ENCODE measurements at regions of chr1 and their contacts with region 1.

Region 1: DNA sequence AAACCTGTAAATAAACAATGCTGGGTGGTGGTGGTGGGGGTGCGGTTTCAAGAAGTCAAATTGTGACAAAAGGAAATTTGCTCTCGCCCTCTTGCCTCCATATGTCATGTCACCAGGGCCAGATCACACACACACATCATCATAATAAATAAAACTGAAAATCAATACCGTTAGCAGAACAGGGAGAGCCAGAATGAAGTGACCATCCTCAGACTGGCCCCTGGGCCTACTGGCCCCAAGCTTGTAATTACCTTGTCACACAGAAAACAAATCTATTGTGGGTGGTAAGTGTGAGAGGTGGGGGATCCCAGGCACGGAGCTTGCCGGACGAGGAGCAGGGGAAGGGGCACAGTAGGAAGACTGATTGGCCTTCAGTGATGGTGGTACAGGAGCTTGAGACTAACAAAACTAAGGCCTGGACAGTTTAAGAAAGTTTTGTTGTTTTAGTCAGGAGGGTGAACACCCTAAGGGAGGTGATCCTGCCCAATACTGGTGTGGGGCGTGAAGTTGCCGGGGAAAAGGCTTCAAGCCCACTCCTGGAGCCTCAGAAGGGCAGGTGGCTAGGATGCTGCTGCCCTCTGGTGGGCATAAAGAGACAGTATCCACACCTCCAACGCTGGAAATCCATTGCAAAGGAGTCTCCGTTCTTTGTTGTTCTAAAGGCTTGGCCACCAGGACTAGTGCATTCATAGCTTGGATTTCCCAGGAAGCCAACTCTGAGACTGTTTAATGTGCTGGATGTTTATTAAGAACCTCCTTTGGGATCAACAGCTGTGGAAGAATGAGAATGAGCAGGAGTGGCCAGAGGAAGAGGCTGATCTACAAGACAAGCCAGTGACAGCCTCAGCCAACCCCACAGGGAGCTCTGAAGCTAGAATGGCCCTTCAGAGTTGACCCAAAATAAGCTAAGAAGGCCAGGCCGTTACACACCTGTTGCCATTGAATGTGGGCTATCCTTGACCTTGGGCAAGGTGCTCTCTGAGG is 8.1 kb upstream of the C1orf216 start:
- DNase-seq: peak; percentile 61
- ATAC-seq: peak; percentile 94
- H3K4me3 Mint-ChIP-seq: no peak overlapping the region
- H3K27ac Mint-ChIP-seq: peak overlapping the region; percentile 56; the same call in 1 of the 2 replicates
- H3K4me1 Mint-ChIP-seq: peaks cover 11% of the 10 kb centered on the region
- H3K27me3 Mint-ChIP-seq: no peaks in the 10 kb centered on the region
- CTCF ChIP-seq: peak; percentile 76

Region 2: GRCh38 chr1:35243691-35244090 is 483.1 kb before region 1 on chr1:
- CTCF ChIA-PET with region 1: no interaction called
- POLR2A ChIA-PET with region 1: no interaction called
- DNase-seq: no peak
- ATAC-seq: no peak
- H3K4me3 Mint-ChIP-seq: no peak overlapping the region
- H3K27ac Mint-ChIP-seq: no peak overlapping the region
- H3K4me1 Mint-ChIP-seq: no peaks in the 10 kb centered on the region
- H3K27me3 Mint-ChIP-seq: no peaks in the 10 kb centered on the region
- CTCF ChIP-seq: no peak

Region 3: GRCh38 chr1:35569936-35570335 is 156.8 kb before region 1 on chr1:
- CTCF ChIA-PET with region 1: interaction called, 80 read pairs
- POLR2A ChIA-PET with region 1: no interaction called
- DNase-seq: no peak
- ATAC-seq: no peak
- H3K4me3 Mint-ChIP-seq: no peak overlapping the region
- H3K27ac Mint-ChIP-seq: no peak overlapping the region
- H3K4me1 Mint-ChIP-seq: peaks cover 15% of the 10 kb centered on the region
- H3K27me3 Mint-ChIP-seq: peaks cover 60% of the 10 kb centered on the region
- CTCF ChIP-seq: no peak

Region 4: DNA sequence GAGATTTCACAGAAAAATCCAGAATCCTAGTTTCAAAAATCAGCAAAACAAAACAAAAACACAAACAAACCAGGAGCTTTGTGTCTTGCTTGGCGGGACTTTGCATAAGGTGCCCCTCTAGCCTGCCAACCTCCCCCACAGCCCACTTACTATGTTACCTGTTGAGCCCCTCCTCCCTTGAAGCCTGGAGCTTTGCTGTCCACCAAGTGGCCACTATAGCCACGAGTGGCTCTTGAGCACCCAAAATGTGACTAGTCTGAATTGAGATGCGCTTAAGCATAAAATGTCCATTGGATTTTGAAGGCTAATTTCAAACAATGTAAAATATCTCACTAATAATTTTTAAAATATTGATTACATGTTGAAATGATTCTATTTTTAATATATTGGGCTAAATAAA is 141.5 kb before region 1 on chr1:
- CTCF ChIA-PET with region 1: interaction called, 19 read pairs
- POLR2A ChIA-PET with region 1: no interaction called
- DNase-seq: no peak
- ATAC-seq: no peak
- H3K4me3 Mint-ChIP-seq: no peak overlapping the region
- H3K27ac Mint-ChIP-seq: no peak overlapping the region
- H3K4me1 Mint-ChIP-seq: peaks cover 10% of the 10 kb centered on the region; the same call in 1 of the 2 replicates
- H3K27me3 Mint-ChIP-seq: peaks cover 3% of the 10 kb centered on the region
- CTCF ChIP-seq: no peak

Region 5: GRCh38 chr1:35702508-35702907 is 24.2 kb before region 1 on chr1:
- CTCF ChIA-PET with region 1: interaction called, 15 read pairs
- POLR2A ChIA-PET with region 1: no interaction called
- DNase-seq: no peak
- ATAC-seq: peak; percentile 10; the same call in 1 of the 2 replicates
- H3K4me3 Mint-ChIP-seq: peak overlapping the region; percentile 33
- H3K27ac Mint-ChIP-seq: no peak overlapping the region
- H3K4me1 Mint-ChIP-seq: peaks cover 45% of the 10 kb centered on the region
- H3K27me3 Mint-ChIP-seq: peaks cover 42% of the 10 kb centered on the region
- CTCF ChIP-seq: no peak

Region 6: GRCh38 chr1:35715568-35716002 is 11.2 kb before region 1 on chr1:
- CTCF ChIA-PET with region 1: interaction called, 104 read pairs
- POLR2A ChIA-PET with region 1: interaction called, 4 read pairs
- DNase-seq: peak; percentile 86
- ATAC-seq: peak; percentile 69
- H3K4me3 Mint-ChIP-seq: no peak overlapping the region
- H3K27ac Mint-ChIP-seq: peak overlapping the region; percentile 70; the same call in 1 of the 2 replicates
- H3K4me1 Mint-ChIP-seq: peaks cover 24% of the 10 kb centered on the region
- H3K27me3 Mint-ChIP-seq: peaks cover 14% of the 10 kb centered on the region
- CTCF ChIP-seq: peak; percentile 73

Region 7: GRCh38 chr1:35753626-35754260 is 27.0 kb after region 1 on chr1:
- CTCF ChIA-PET with region 1: interaction called, 11 read pairs
- POLR2A ChIA-PET with region 1: no interaction called
- DNase-seq: no peak
- ATAC-seq: no peak
- H3K4me3 Mint-ChIP-seq: no peak overlapping the region
- H3K27ac Mint-ChIP-seq: no peak overlapping the region
- H3K4me1 Mint-ChIP-seq: no peaks in the 10 kb centered on the region
- H3K27me3 Mint-ChIP-seq: no peaks in the 10 kb centered on the region
- CTCF ChIP-seq: no peak

Region 8: DNA sequence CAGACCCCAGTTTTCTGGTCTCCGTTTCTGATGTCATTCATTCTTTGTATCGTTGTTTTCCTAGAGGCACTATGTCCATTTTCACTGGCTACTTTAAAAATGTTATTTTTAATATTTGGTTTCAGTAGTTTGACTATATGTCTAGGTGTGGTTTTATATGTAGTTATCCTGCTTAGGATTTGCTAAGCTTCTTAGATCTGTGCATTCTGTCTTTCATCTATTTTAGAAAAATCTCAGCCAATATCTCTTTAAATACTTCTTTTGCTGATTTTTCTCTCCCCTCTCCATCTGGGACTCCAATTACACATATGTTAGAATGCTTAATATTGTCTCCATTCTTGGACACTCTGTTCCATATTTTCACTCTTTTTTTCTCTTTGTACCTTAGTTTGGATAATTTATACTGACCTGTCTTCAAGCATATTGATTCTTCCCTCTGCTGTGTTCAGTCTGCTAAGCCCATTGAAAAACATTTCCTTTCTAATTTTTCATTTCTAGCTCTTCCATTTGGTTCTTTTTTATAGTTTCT is 56.4 kb after region 1 on chr1:
- CTCF ChIA-PET with region 1: no interaction called
- POLR2A ChIA-PET with region 1: no interaction called
- DNase-seq: no peak
- ATAC-seq: no peak
- H3K4me3 Mint-ChIP-seq: no peak overlapping the region
- H3K27ac Mint-ChIP-seq: no peak overlapping the region
- H3K4me1 Mint-ChIP-seq: no peaks in the 10 kb centered on the region
- H3K27me3 Mint-ChIP-seq: no peaks in the 10 kb centered on the region; the same call in 1 of the 2 replicates
- CTCF ChIP-seq: no peak

Region 9: DNA sequence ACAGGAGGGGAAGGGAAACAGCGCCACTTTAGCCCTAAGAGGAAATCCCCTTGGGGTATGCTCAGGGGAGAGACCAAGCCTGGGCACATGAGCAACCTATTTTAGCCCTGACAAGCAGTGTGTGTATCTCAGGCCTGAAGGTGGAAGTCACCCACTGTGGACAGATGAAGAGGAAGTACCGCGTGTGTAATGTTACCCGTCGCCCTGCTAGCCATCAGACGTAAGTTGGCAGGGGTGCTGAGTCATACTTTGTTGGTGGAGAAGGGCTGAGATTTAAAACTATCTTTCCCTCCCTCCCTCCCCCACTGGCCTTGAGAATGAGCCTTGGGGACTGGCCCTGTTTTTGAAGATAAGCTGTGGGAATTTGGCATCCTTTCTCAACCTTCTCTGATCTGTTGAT is 167.4 kb after region 1 on chr1:
- CTCF ChIA-PET with region 1: no interaction called
- POLR2A ChIA-PET with region 1: no interaction called
- DNase-seq: no peak
- ATAC-seq: no peak
- H3K4me3 Mint-ChIP-seq: no peak overlapping the region
- H3K27ac Mint-ChIP-seq: 0 out of 2 replicates have a peak overlapping the region, but pooled peaks have one; percentile 34
- H3K4me1 Mint-ChIP-seq: no peaks in the 10 kb centered on the region; the same call in 1 of the 2 replicates
- H3K27me3 Mint-ChIP-seq: no peaks in the 10 kb centered on the region
- CTCF ChIP-seq: no peak

Measured in WTC11 (cell line).